Heart right ventricle (tissue), 16 donors: ENCODE measurements at regions of chr22 and their contacts with region 1.

Region 1: DNA sequence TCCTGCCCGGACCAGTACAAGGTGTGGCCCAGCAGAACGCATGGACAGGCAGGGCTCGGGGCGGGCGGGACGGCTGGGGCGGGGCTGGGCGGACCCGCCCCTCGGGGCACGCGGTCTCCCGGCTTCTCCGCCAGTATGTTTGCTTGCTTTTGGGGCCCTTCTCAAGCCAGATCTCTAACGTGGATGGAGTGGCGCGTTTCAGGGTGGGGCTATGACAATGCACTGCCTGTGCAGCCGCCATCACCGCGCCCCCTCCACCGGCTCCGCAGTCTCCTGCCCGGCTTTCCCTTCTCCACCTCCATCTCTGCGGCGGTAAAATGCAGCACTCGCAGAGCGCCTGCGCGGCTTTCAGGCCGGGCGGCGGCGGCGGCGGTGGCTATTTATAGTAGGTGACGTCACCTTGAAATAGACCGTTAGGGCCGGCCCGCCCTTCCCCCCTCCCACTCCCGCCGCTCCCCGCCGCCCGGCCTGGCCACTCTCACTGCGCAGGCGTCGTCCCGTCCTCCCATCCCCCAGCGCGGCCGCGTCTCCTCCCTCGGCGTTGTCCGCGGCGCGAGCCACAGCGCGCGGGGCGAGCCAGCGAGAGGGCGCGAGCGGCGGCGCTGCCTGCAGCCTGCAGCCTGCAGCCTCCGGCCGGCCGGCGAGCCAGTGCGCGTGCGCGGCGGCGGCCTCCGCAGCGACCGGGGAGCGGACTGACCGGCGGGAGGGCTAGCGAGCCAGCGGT is at the start of gene YWHAH:
- DNase-seq: peak; percentile 96 to 98
- ATAC-seq: peak; percentile 93 to 96 (median 94)
- H3K4me3 ChIP-seq: peak within 1 kb of the TSS; percentile 76 to 96 (median 86)
- H3K27ac ChIP-seq: peak within 1 kb of the TSS; percentile 95 to 99 (median 99)
- H3K4me1 ChIP-seq: peaks cover 0 to 43% (median 38%) of the 10 kb centered on the region in 9 donors
- H3K27me3 ChIP-seq: no peaks in the 10 kb centered on the region
- CTCF ChIP-seq: no peak
- total RNA-seq, gene YWHAH: 57.7 to 115 (median 75.8) TPM

Region 2: DNA sequence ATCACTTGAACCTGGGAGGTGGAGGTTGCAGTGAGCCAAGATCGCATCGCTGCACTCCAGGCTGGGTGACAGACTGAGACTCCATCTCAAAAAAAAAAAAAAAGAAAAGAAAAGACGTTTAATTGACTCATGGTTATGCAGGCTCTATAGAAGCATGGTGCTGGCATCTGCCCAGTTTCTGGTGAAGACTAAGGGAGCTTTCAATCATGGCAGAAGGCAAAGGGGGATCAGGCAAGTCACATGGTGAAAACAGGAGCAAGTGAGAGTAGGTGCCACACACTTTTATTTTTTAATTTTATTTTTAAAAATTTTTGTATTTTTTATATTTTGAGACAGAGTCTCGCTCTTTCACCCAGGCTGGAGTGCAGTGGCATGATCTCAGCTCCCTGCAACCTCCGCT is 589.6 kb before region 1 on chr22:
- intact Hi-C with region 1: no loop called
- DNase-seq: no peak
- ATAC-seq: no peak
- H3K4me3 ChIP-seq: no peak overlapping the region
- H3K27ac ChIP-seq: no peak overlapping the region
- H3K4me1 ChIP-seq: no peaks in the 10 kb centered on the region
- H3K27me3 ChIP-seq: peaks cover 0 to 14% (median 3%) of the 10 kb centered on the region in 7 donors
- CTCF ChIP-seq: no peak

Region 3: GRCh38 chr22:31661851-31662656 is 282.1 kb before region 1 on chr22 and contains the start of gene PISD:
- intact Hi-C with region 1: loop called in 4 of 10 experiments (anchors 1 to 10 kb)
- DNase-seq: peak; percentile 95
- ATAC-seq: peak; percentile 98 to 100 (median 100)
- H3K4me3 ChIP-seq: peak within 1 kb of the TSS; percentile 56 to 99 (median 90)
- H3K27ac ChIP-seq: peak within 1 kb of the TSS in 9 of 10 donors; percentile 24 to 81 (median 62)
- H3K4me1 ChIP-seq: peaks cover 2 to 20% (median 14%) of the 10 kb centered on the region in 9 donors
- H3K27me3 ChIP-seq: no peaks in the 10 kb centered on the region
- CTCF ChIP-seq: no peak
- total RNA-seq, gene PISD: 16.3 to 30.0 (median 18.7) TPM

Region 4: DNA sequence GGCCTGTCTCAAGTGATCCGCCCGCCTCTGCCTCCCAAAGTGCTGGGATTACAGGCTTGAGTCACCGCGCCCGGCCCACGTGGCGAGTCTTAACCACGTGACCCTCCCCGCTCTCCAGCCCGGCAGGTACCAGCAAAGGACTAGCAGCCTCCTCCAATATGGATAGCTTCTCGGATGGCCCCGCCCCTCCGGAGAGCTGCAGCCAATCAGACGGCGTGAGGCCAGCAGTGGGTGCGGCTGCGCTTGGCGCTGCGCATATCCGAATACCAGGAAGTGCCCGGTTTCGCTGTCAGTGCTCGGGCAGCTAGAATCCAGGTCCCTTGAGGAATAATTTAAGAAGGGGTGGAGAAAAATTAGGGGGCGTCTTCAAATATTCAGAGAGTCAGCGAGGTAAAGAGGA is 267.4 kb before region 1 on chr22:
- intact Hi-C with region 1: loop called in 2 of 10 experiments (anchors 10 kb)
- DNase-seq: peak; percentile 94
- ATAC-seq: peak; percentile 98 to 100 (median 99)
- H3K4me3 ChIP-seq: peak overlapping the region; percentile 25 to 61 (median 53)
- H3K27ac ChIP-seq: peak overlapping the region in 8 of 10 donors; percentile 11 to 88 (median 57)
- H3K4me1 ChIP-seq: peaks cover 0 to 33% (median 7%) of the 10 kb centered on the region in 9 donors
- H3K27me3 ChIP-seq: no peaks in the 10 kb centered on the region
- CTCF ChIP-seq: no peak

Region 5: GRCh38 chr22:31749636-31750364 is 194.3 kb before region 1 on chr22 and contains the start of gene PRR14L:
- intact Hi-C with region 1: loop called in 4 of 10 experiments (anchors 1 to 10 kb)
- DNase-seq: peak; percentile 99
- ATAC-seq: peak; percentile 91 to 95 (median 92)
- H3K4me3 ChIP-seq: peak within 1 kb of the TSS; percentile 68 to 98 (median 90)
- H3K27ac ChIP-seq: peak within 1 kb of the TSS; percentile 32 to 98 (median 90)
- H3K4me1 ChIP-seq: peaks cover 9 to 63% (median 45%) of the 10 kb centered on the region in 9 donors
- H3K27me3 ChIP-seq: no peaks in the 10 kb centered on the region
- CTCF ChIP-seq: peak in 4 of 9 donors; percentile 10 to 38 (median 28)
- total RNA-seq, gene PRR14L: 10.9 to 19.6 (median 17.3) TPM

Region 6: DNA sequence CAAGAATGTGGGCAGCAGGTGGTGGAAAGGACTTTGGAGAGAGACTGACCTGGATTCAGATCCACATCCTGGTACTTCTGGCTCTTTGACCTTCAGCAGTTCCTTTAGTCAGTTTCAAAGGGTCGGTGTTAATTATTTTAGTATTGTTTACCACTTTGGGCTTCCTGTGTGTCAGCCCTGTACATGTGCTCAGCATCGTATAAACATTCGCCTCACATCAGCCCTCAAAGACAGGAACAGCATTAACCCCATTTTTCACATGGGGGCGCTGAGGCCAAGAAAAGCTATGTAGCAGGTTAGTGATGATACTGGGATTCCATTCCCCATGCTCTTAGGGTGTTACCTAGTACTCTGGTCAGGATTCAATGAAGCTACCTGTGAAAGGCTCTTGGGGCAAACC is 71.9 kb before region 1 on chr22:
- intact Hi-C with region 1: loop called in 1 of 10 experiments (anchors 5 kb)
- DNase-seq: no peak
- ATAC-seq: no peak
- H3K4me3 ChIP-seq: no peak overlapping the region
- H3K27ac ChIP-seq: no peak overlapping the region
- H3K4me1 ChIP-seq: peaks cover 0 to 17% (median 0%) of the 10 kb centered on the region in 9 donors
- H3K27me3 ChIP-seq: no peaks in the 10 kb centered on the region
- CTCF ChIP-seq: peak in 5 of 9 donors; percentile 19 to 48 (median 29)

Region 7: DNA sequence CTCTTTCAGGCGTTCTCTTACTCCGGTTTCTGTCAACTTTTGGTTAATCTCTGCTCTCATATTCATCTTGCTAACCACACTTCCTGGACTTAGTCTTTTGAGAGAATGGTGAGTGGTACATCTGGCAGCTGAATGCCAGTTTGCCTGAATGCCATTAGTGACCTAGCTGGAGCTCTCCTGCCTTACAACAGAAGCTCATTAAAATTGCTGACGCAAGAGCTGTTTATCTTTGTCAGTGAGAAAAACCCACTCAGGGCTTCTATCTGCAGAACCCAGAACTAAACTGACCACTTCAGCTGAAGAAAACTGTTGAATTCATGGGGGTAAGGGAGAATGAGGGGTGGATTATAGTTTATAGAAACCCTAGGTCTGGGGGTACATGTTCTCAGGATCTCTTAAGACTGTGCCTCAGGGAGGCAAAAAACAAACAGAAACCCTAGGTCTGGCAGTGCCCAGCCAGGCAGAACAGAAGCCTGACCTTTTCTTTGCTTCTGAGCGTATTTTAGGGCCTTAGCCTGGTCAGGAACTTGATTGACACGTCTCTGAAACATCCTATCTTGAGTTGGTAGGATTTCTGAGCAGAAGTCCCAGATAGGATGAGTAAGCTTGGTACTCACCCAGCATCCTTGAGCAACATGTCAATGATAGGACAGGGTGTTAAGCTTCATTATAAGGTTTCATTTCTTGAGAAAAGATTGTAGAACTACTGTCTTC is 52.6 kb before region 1 on chr22:
- intact Hi-C with region 1: loop called in 1 of 10 experiments (anchors 5 kb)
- DNase-seq: no peak
- ATAC-seq: no peak
- H3K4me3 ChIP-seq: no peak overlapping the region
- H3K27ac ChIP-seq: no peak overlapping the region
- H3K4me1 ChIP-seq: no peaks in the 10 kb centered on the region
- H3K27me3 ChIP-seq: no peaks in the 10 kb centered on the region
- CTCF ChIP-seq: no peak